SK-N-SH (cell line): ENCODE measurements at regions of chr13 and their contacts with region 1.

Region 1: GRCh38 chr13:32586080-32586900 is at the start of gene PDS5B:
- DNase-seq: peak; percentile 98
- H3K4me3 ChIP-seq: peak within 1 kb of the TSS; percentile 88 to 91
- H3K27ac ChIP-seq: peak within 1 kb of the TSS; percentile 90 to 97
- H3K4me1 ChIP-seq: peaks cover 15 to 26% of the 10 kb centered on the region in 2 experiments; a peak in 3 of 4 replicates
- H3K27me3 ChIP-seq: no peaks in the 10 kb centered on the region
- CTCF ChIP-seq: peak; percentile 74
- EP300 ChIP-seq: peak in 1 of 2 experiments; percentile 34; a peak in 1 of 4 replicates
- RAD21 ChIP-seq: peak; percentile 88
- polyA plus RNA-seq, gene PDS5B: 3.7 and 3.8 TPM in 2 replicates

Region 2: GRCh38 chr13:32600890-32601289 is 14.6 kb after region 1 on chr13:
- CTCF ChIA-PET with region 1: interaction called, 10 read pairs
- POLR2A ChIA-PET with region 1: no interaction called
- DNase-seq: no peak
- H3K4me3 ChIP-seq: no peak overlapping the region
- H3K27ac ChIP-seq: no peak overlapping the region
- H3K4me1 ChIP-seq: no peaks in the 10 kb centered on the region
- H3K27me3 ChIP-seq: no peaks in the 10 kb centered on the region
- CTCF ChIP-seq: no peak
- EP300 ChIP-seq: no peak
- RAD21 ChIP-seq: no peak

Region 3: DNA sequence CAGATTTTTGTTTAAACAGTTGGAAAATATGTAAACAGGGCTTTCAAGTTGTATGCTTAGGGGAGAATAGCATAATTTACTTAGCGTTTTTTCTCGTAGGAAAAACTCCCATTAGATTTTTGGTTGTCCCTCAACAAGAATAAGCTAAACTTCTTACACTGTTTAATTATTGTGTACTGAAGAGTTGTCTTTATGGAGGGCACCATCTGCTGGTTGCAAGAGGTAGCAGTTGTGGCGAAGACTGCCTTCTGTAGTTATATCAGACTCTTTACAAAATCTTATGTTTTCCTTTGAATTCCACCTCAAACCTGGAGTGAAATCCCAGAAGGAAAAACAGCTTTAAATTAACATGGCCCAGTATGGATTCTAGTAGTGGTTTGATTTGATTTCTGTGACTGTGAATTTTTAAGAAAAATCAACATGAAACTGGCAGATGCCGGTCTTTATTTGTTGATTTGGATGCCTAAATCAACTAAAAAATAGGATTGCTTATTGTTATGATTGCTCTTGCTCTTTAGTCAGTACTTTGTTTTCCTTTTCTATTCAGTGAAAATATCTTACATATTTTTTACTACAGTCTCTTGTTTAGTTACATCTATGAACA is 53.3 kb after region 1 on chr13:
- CTCF ChIA-PET with region 1: interaction called, 13 read pairs
- POLR2A ChIA-PET with region 1: no interaction called
- DNase-seq: peak; percentile 33
- H3K4me3 ChIP-seq: no peak overlapping the region
- H3K27ac ChIP-seq: no peak overlapping the region; a peak in 1 of 4 replicates
- H3K4me1 ChIP-seq: peaks cover 6 to 7% of the 10 kb centered on the region in 2 experiments; a peak in 3 of 4 replicates
- H3K27me3 ChIP-seq: no peaks in the 10 kb centered on the region
- CTCF ChIP-seq: peak; percentile 86
- EP300 ChIP-seq: no peak
- RAD21 ChIP-seq: peak; percentile 77

Region 4: GRCh38 chr13:32669030-32669646 is 82.8 kb after region 1 on chr13:
- CTCF ChIA-PET with region 1: interaction called, 18 read pairs
- POLR2A ChIA-PET with region 1: no interaction called
- DNase-seq: peak; percentile 36
- H3K4me3 ChIP-seq: no peak overlapping the region
- H3K27ac ChIP-seq: no peak overlapping the region
- H3K4me1 ChIP-seq: no peaks in the 10 kb centered on the region
- H3K27me3 ChIP-seq: no peaks in the 10 kb centered on the region
- CTCF ChIP-seq: peak; percentile 88
- EP300 ChIP-seq: no peak
- RAD21 ChIP-seq: peak; percentile 58

Region 5: GRCh38 chr13:33542283-33543088 is 956.2 kb after region 1 on chr13:
- CTCF ChIA-PET with region 1: interaction called, 28 read pairs
- POLR2A ChIA-PET with region 1: interaction called, 6 read pairs
- DNase-seq: peak; percentile 93
- H3K4me3 ChIP-seq: peak overlapping the region; percentile 53 to 66
- H3K27ac ChIP-seq: peak overlapping the region; percentile 100
- H3K4me1 ChIP-seq: peaks cover 19 to 25% of the 10 kb centered on the region in 2 experiments; a peak in 3 of 4 replicates
- H3K27me3 ChIP-seq: no peaks in the 10 kb centered on the region
- CTCF ChIP-seq: peak; percentile 90
- EP300 ChIP-seq: peak; percentile 49 to 58; a peak in 3 of 4 replicates
- RAD21 ChIP-seq: peak; percentile 96

Region 6: DNA sequence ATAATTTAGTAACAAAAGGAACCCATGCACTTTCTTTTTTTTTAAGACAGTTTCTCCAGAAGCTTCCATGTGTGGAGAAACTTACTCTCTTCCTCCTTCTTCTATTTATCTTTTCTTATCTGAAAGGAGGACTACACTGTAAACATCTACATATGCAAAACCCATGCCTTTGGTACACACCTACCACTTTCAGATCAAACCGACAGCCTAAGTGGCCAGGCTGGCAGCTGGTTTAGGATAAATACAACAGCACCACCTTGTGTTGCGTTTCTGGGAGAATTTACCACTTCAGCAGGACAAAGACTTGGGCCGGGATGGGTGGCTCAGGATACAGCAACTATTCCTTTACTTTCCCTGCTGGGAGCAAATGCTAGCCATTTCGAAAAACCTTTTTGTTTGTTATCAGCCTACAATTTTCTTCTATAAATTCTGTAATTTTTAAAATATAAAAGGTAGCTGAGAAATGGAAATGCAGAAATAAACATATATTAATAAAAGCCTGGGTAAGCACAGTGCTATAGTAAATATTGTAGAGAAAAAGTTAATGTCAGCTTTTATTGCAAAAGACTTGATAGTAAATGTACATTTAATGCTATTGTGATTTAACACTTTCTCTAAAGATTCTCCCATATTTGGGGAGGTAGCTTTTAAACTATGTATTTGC is 1137.6 kb after region 1 on chr13:
- CTCF ChIA-PET with region 1: interaction called, 17 read pairs
- POLR2A ChIA-PET with region 1: no interaction called
- DNase-seq: peak; percentile 66
- H3K4me3 ChIP-seq: peak overlapping the region in 1 of 2 experiments; percentile 38; a peak in 1 of 4 replicates
- H3K27ac ChIP-seq: peak overlapping the region in 1 of 2 experiments; percentile 86; a peak in 2 of 4 replicates
- H3K4me1 ChIP-seq: peaks cover 8 to 19% of the 10 kb centered on the region in 2 experiments; a peak in 3 of 4 replicates
- H3K27me3 ChIP-seq: no peaks in the 10 kb centered on the region
- CTCF ChIP-seq: peak; percentile 83
- EP300 ChIP-seq: no peak
- RAD21 ChIP-seq: peak; percentile 95